CD4-positive, alpha-beta T cell (primary cell): ENCODE measurements at regions of chr19 and their contacts with region 1.

Region 1: GRCh38 chr19:6460101-6460853 is 685 bp upstream of the SLC25A23 start:
- DNase-seq: peak; percentile 95 to 97 (median 96)
- ATAC-seq: peak; percentile 80
- H3K4me3 ChIP-seq: peak overlapping the region; percentile 68
- H3K4me3 Mint-ChIP-seq: peak overlapping the region; percentile 91
- H3K27ac ChIP-seq: peak overlapping the region; percentile 44 to 89
- H3K27ac Mint-ChIP-seq: peak overlapping the region; percentile 86
- H3K4me1 ChIP-seq: peaks cover 36% of the 10 kb centered on the region
- H3K4me1 Mint-ChIP-seq: peaks cover 31% of the 10 kb centered on the region
- H3K27me3 ChIP-seq: no peaks in the 10 kb centered on the region
- H3K27me3 Mint-ChIP-seq: no peaks in the 10 kb centered on the region
- CTCF ChIP-seq: peak; percentile 75

Region 2: GRCh38 chr19:6212403-6213265 is 247.6 kb before region 1 on chr19:
- CTCF ChIA-PET with region 1: no interaction called
- POLR2A ChIA-PET with region 1: no interaction called
- intact Hi-C with region 1: no loop called
- DNase-seq: no peak
- ATAC-seq: no peak
- H3K4me3 ChIP-seq: no peak overlapping the region
- H3K4me3 Mint-ChIP-seq: no peak overlapping the region
- H3K27ac ChIP-seq: no peak overlapping the region
- H3K27ac Mint-ChIP-seq: no peak overlapping the region
- H3K4me1 ChIP-seq: no peaks in the 10 kb centered on the region
- H3K4me1 Mint-ChIP-seq: no peaks in the 10 kb centered on the region
- H3K27me3 ChIP-seq: no peaks in the 10 kb centered on the region
- H3K27me3 Mint-ChIP-seq: no peaks in the 10 kb centered on the region
- CTCF ChIP-seq: no peak

Region 3: GRCh38 chr19:6393074-6393983 is 66.9 kb before region 1 on chr19 and contains the start of gene GTF2F1:
- CTCF ChIA-PET with region 1: no interaction called
- POLR2A ChIA-PET with region 1: no interaction called
- intact Hi-C with region 1: loop called in 1 of 2 experiments (anchors 2 kb)
- DNase-seq: peak; percentile 88 to 97 (median 90)
- ATAC-seq: peak; percentile 81
- H3K4me3 ChIP-seq: peak within 1 kb of the TSS; percentile 78
- H3K4me3 Mint-ChIP-seq: peak within 1 kb of the TSS; percentile 97
- H3K27ac ChIP-seq: peak within 1 kb of the TSS; percentile 89 to 98
- H3K27ac Mint-ChIP-seq: peak within 1 kb of the TSS; percentile 99
- H3K4me1 ChIP-seq: peaks cover 29% of the 10 kb centered on the region
- H3K4me1 Mint-ChIP-seq: peaks cover 29% of the 10 kb centered on the region
- H3K27me3 ChIP-seq: no peaks in the 10 kb centered on the region
- H3K27me3 Mint-ChIP-seq: no peaks in the 10 kb centered on the region
- CTCF ChIP-seq: no peak
- total RNA-seq, gene GTF2F1: 56.1 to 61.1 TPM

Region 4: GRCh38 chr19:6412447-6413091 is 47.7 kb before region 1 on chr19:
- CTCF ChIA-PET with region 1: no interaction called
- POLR2A ChIA-PET with region 1: no interaction called
- intact Hi-C with region 1: no loop called
- DNase-seq: peak; percentile 30 to 73 (median 43)
- ATAC-seq: peak; percentile 80
- H3K4me3 ChIP-seq: no peak overlapping the region
- H3K4me3 Mint-ChIP-seq: no peak overlapping the region
- H3K27ac ChIP-seq: no peak overlapping the region
- H3K27ac Mint-ChIP-seq: no peak overlapping the region
- H3K4me1 ChIP-seq: no peaks in the 10 kb centered on the region
- H3K4me1 Mint-ChIP-seq: no peaks in the 10 kb centered on the region
- H3K27me3 ChIP-seq: no peaks in the 10 kb centered on the region
- H3K27me3 Mint-ChIP-seq: no peaks in the 10 kb centered on the region
- CTCF ChIP-seq: peak; percentile 61

Region 5: DNA sequence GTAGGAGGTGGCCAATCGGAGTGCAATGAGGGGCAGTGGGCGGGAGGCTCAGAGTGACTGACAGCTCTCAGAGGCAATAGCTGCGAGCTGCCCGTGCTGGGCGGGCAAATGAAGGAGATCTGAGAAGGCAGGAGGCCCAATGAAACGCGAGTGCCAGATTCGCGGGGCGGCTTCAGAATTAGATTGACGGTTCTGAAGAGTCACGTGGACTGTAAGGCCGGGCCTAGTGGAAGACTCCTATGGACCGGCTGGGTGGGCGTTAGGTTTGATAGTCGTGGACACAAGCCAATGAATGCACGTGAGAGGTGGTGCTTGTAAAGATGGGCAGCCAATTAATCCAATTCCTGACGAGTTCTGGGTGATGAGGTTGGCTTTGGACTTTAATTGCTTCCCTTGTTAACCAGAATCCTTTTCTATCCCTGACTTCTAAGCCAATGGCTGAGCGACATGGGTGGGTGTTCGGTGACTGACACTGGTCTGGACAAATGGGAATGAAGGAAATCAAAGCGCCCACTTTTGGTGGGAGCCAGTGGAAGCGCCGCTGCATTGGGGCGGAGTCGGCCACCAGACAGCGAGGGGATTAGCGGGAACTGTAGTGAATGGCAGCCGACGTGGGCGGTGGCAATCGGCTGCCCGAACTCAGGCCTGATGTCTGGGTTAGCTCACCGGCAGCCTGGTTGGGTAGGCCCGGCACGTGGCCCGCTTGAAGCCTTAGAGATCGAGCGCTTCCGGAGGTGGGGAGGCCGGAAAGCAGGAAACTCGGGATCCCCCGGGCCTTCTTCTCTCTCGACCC is 35.1 kb before region 1 on chr19:
- CTCF ChIA-PET with region 1: no interaction called
- POLR2A ChIA-PET with region 1: interaction called, 6 read pairs
- intact Hi-C with region 1: loop called (anchors 1 kb)
- DNase-seq: peak; percentile 96 to 100 (median 98)
- ATAC-seq: peak; percentile 83
- H3K4me3 ChIP-seq: peak overlapping the region; percentile 46
- H3K4me3 Mint-ChIP-seq: peak overlapping the region; percentile 90
- H3K27ac ChIP-seq: peak overlapping the region; percentile 75 to 87
- H3K27ac Mint-ChIP-seq: peak overlapping the region; percentile 81
- H3K4me1 ChIP-seq: peaks cover 48% of the 10 kb centered on the region
- H3K4me1 Mint-ChIP-seq: peaks cover 37% of the 10 kb centered on the region
- H3K27me3 ChIP-seq: no peaks in the 10 kb centered on the region
- H3K27me3 Mint-ChIP-seq: no peaks in the 10 kb centered on the region
- CTCF ChIP-seq: no peak

Region 6: GRCh38 chr19:6481541-6482342 is 21.5 kb after region 1 on chr19 and contains the start of gene DENND1C:
- CTCF ChIA-PET with region 1: no interaction called
- POLR2A ChIA-PET with region 1: interaction called, 11 read pairs
- intact Hi-C with region 1: loop called (anchors 1 to 2 kb)
- DNase-seq: peak; percentile 49 to 86 (median 66)
- ATAC-seq: peak; percentile 89
- H3K4me3 ChIP-seq: peak within 1 kb of the TSS; percentile 90
- H3K4me3 Mint-ChIP-seq: peak within 1 kb of the TSS; percentile 89
- H3K27ac ChIP-seq: peak within 1 kb of the TSS; percentile 87 to 93
- H3K27ac Mint-ChIP-seq: peak within 1 kb of the TSS; percentile 98
- H3K4me1 ChIP-seq: peaks cover 45% of the 10 kb centered on the region
- H3K4me1 Mint-ChIP-seq: peaks cover 46% of the 10 kb centered on the region
- H3K27me3 ChIP-seq: no peaks in the 10 kb centered on the region
- H3K27me3 Mint-ChIP-seq: no peaks in the 10 kb centered on the region
- CTCF ChIP-seq: no peak
- total RNA-seq, gene DENND1C: 111 to 118 TPM

Region 7: DNA sequence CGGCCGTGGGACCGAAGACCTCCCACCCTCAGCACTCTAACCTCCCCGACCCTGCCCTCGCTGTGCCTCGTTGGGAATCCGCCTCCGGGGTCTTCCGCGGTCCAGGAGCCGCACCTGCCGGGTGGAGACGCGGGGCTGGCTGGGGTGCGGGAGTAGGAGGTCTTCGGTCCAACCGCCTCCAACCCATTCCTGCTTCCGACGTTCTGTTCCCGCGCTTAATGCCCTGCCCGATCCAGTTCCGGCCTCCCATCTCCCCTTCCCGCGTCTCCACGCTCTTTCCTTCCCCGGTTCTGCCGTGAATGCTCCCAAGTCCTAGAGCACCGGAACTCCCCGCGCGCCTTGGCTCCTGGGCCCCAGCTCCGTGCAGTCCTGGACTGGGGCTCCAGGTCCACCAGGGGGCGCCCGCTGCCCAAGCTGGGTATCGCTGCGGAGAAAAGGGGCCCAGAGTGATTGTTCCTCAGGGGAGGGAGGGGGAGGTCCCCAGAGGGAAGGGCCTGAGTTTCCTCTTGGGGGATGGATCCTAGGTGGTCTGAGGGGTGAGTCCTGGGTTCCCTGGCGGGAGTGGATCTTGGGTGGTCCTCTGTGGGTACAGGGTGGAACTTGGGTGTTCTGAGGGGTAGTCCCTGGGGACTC is 56.5 kb after region 1 on chr19:
- CTCF ChIA-PET with region 1: no interaction called
- POLR2A ChIA-PET with region 1: interaction called, 3 read pairs
- intact Hi-C with region 1: loop called in 1 of 2 experiments (anchors 1 kb)
- DNase-seq: peak; percentile 81 to 95 (median 90)
- ATAC-seq: peak; percentile 91
- H3K4me3 ChIP-seq: peak overlapping the region; percentile 86
- H3K4me3 Mint-ChIP-seq: peak overlapping the region; percentile 94
- H3K27ac ChIP-seq: no peak overlapping the region
- H3K27ac Mint-ChIP-seq: peak overlapping the region; percentile 24
- H3K4me1 ChIP-seq: peaks cover 32% of the 10 kb centered on the region
- H3K4me1 Mint-ChIP-seq: peaks cover 33% of the 10 kb centered on the region
- H3K27me3 ChIP-seq: no peaks in the 10 kb centered on the region
- H3K27me3 Mint-ChIP-seq: no peaks in the 10 kb centered on the region
- CTCF ChIP-seq: peak; percentile 95